GM18951 (cell line): ENCODE measurements at regions of chr13 and their contacts with region 1.

Region 1: DNA sequence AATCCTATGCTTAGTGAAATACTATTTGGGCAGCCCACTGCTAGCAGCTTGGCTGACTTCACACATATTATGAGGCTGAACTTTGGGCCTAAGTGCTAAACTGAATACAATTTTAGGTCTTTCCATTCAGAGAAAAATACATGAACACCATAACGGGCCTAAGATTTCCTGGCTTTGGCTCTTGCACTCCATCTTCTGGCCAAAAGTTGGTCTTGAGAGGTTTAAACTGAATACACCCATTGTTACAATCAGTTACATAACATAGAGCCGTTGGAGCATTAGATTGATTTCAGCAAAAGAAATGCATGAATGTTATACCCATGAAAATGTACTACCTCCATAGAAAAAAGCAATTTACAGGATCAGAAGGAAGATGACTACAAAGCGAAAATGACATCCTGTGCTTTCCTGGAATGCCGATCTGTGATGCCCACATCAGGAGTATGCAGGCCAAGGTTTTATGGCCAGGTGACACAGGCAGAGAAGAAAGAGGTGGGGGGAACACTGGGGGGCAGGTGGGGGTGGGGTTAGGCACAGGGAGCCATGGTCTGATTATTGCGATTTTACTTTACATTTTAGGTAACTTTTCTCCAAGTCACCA is 11.1 kb upstream of the SHISA2 start:
- POLR2A ChIP-seq: no peak

Region 2: DNA sequence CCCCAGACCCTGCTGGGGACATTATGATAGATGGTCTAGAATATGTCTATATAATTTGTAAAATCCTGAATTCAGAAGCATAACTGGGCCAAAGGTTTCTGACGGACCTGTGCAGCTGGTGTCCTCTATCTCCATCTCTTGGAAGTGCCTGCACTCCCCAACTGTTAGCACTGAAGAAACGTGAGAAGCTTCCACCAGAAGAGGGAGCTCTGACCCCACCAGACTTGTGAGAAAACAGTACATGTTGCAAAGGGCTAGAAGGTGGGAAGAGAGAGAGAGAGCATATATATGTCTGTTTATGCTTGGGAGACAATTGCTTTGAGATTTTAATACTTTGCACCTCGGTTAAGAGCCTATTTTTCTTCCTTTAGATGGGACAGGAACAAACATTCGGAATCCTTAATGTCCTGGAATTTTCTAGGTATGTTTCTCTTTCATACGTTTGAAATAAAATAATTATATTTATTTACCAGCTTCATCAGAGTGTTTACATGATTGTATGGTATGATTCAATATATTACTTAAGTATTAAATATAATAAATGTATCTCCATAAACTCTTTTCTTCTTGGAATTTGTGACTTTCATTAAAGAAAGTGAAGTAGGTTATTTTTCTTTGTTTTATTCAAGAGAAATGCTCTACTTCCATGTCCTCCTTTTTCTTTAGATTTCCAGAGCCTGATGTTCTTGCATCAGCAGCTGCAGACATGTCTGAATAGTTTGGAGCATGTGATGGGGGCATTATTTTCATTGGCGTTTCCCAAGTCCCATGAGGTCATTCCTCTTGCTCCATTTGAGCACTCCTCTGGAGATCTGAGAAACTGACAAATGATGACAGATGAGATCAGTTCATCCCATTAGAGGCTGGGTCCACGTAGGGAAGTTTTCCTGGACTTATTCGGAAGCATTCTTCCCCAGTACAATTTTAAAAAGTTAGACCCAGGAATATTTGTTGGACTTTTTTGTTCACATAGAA is 488.2 kb before region 1 on chr13:
- in situ Hi-C with region 1: loop called (anchors 10 kb)
- POLR2A ChIP-seq: no peak

Region 3: DNA sequence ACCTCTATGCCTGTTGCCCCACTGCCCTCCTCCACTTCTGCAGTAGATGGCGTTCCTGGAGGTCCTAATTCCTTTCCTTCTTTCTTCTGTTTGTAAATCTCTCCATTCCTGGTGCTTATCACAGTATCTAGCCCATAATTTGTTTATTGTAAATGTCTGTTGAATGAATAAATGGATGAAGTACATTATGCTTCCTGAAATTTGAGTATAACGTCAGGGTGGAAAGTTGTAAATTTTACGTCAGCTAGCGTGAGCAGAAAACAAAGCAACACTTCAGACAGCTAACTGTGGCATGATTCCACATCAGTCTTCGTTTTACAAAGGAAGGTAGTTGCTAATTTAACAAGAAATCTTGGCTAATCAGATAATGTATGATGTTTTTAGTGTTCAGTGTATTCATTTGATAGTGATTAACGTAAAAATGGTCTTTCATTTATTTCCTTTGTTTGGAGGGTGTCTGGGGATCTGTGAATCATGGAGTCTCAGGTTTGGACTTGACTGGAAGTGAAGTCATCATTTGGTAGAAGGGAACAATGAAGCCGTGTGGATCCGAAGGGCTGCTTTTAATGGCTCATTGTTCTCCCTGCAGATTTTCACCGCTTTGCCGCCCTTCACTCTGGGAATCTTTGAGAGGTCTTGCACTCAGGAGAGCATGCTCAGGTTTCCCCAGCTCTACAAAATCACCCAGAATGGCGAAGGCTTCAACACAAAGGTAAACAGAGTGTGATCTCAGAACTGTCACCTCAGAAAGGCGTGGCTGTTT is 226.2 kb before region 1 on chr13:
- in situ Hi-C with region 1: loop called (anchors 10 kb)
- POLR2A ChIP-seq: no peak

Region 4: DNA sequence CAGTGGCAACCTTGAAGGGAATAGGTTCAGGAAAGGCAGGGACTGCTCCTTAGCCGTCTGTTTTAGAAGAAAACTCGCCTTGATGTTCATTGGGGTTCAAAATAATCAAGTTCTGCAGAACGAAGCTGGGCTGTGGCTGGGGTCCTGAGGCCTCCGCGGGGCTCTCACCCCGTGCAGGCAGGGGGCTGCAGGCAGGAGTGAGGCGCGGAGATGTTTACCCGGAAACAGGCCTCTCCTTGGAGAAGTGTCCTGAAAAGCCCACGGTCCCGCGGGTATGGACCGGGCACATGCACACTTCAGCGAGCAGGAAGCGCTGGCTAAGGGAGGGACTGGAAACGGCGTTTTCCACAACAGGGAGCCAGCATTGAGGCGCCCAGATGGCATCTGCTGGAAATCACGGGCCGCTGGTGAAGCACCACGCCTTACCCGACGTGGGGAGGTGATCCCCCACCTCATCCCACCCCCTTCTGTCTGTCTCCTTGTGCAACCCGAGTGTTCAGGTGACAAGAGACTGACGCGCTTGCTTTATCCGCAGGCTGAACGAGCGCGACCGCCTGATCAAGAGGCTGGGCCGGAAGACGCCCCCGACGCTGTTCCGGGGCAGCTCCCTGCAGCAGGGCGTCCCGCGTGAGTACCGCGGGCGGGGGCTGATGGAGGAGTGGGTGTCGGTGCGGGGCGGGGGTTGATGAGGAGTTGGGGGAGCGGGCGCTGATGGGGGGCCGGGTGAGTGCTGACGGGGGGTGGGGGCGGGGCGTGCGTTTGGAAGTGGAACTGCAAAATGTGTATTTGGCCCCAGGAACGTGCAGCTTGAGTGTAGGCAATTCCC is 50.7 kb before region 1 on chr13:
- in situ Hi-C with region 1: no loop called
- POLR2A ChIP-seq: no peak